Endothelial cell of umbilical vein (primary cell): ENCODE measurements at regions of chr7 and their contacts with region 1.

Region 1: GRCh38 chr7:18666107-18666728 is 170.7 kb downstream of the HDAC9 start:
- DNase-seq: peak; percentile 62
- H3K4me3 ChIP-seq: no peak overlapping the region
- H3K27ac ChIP-seq: no peak overlapping the region
- H3K4me1 ChIP-seq: peaks cover 28% of the 10 kb centered on the region
- H3K27me3 ChIP-seq: peaks cover 11 to 23% of the 10 kb centered on the region in 2 experiments
- CTCF ChIP-seq: peak; percentile 92 to 93
- POLR2A ChIP-seq: no peak

Region 2: GRCh38 chr7:18508443-18509427 is 157.5 kb before region 1 on chr7:
- CTCF ChIA-PET with region 1: no interaction called
- POLR2A ChIA-PET with region 1: no interaction called
- dilution Hi-C with region 1: no loop called
- intact Hi-C with region 1: loop called (anchors 5 kb)
- DNase-seq: peak; percentile 93
- H3K4me3 ChIP-seq: peak overlapping the region in 1 of 3 experiments; percentile 64
- H3K27ac ChIP-seq: peak overlapping the region; percentile 94
- H3K4me1 ChIP-seq: peaks cover 31% of the 10 kb centered on the region
- H3K27me3 ChIP-seq: no peaks in the 10 kb centered on the region
- CTCF ChIP-seq: no peak
- POLR2A ChIP-seq: no peak

Region 3: GRCh38 chr7:18590744-18591340 is 75.4 kb before region 1 on chr7:
- CTCF ChIA-PET with region 1: interaction called, 18 read pairs
- POLR2A ChIA-PET with region 1: no interaction called
- dilution Hi-C with region 1: no loop called
- intact Hi-C with region 1: loop called (anchors 1 kb)
- DNase-seq: peak; percentile 59
- H3K4me3 ChIP-seq: no peak overlapping the region
- H3K27ac ChIP-seq: no peak overlapping the region
- H3K4me1 ChIP-seq: no peaks in the 10 kb centered on the region
- H3K27me3 ChIP-seq: no peaks in the 10 kb centered on the region
- CTCF ChIP-seq: peak; percentile 30 to 38
- POLR2A ChIP-seq: no peak

Region 4: GRCh38 chr7:18655912-18656311 is 10.3 kb before region 1 on chr7:
- CTCF ChIA-PET with region 1: interaction called, 15 read pairs
- POLR2A ChIA-PET with region 1: no interaction called
- dilution Hi-C with region 1: no loop called
- intact Hi-C with region 1: no loop called
- DNase-seq: no peak
- H3K4me3 ChIP-seq: no peak overlapping the region
- H3K27ac ChIP-seq: no peak overlapping the region
- H3K4me1 ChIP-seq: no peaks in the 10 kb centered on the region
- H3K27me3 ChIP-seq: no peaks in the 10 kb centered on the region
- CTCF ChIP-seq: no peak
- POLR2A ChIP-seq: no peak

Region 5: DNA sequence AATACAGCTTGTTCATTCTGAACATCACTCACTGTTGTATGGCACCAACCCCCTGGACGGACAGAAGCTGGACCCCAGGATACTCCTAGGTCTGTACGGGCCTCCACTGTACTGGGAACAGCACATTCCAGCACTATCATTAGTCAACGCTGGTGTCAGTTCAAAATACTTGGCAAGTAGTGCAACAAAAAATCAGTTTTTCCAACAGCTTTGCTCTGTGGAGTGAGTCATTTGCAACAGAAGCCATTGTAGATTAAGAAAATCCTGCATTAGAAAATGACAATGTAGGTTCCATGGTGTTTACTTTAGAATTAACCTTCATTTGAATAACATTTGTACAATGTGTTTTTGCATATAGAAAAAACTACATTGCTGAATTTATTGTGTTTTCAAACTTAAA is 96.0 kb after region 1 on chr7:
- CTCF ChIA-PET with region 1: no interaction called
- POLR2A ChIA-PET with region 1: no interaction called
- dilution Hi-C with region 1: no loop called
- intact Hi-C with region 1: no loop called
- DNase-seq: peak; percentile 54
- H3K4me3 ChIP-seq: no peak overlapping the region
- H3K27ac ChIP-seq: no peak overlapping the region
- H3K4me1 ChIP-seq: no peaks in the 10 kb centered on the region
- H3K27me3 ChIP-seq: no peaks in the 10 kb centered on the region
- CTCF ChIP-seq: no peak
- POLR2A ChIP-seq: no peak

Region 6: DNA sequence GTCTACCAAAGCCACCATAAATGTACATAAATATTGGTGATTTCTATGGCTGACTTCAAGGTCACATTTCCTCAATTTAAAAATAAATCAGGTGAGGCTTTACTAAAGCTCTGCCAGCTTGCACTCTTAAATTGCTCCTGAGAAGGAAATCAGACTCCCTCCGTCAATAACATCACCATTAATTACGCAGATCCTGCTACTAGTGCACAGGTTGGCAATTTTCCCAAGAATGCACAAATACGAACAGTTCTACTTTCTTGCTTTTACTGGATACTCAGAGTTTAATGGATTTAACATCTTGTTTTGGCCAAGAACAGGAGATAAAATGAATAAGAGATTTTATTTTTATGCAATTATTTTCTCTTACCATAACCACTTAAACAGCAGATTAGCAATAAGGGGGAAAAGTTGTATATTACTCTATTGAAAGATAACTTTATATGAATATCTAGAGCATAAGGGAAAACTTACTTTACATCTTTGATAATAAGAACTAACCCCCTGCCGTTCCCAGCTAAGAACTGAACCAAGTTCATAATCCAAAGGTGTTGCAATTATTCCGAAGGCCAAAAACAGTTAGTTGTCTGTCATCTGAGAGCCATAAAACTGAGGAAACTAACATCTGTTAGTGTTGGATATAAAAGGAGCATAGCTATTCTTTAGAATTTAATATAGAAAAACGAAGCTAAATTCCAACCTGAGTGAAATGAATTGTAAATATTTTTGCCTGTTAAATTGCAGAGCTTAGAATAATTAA is 310.7 kb after region 1 on chr7:
- CTCF ChIA-PET with region 1: interaction called, 3 read pairs
- POLR2A ChIA-PET with region 1: no interaction called
- dilution Hi-C with region 1: no loop called
- intact Hi-C with region 1: loop called (anchors 2 kb)
- DNase-seq: peak; percentile 10
- H3K4me3 ChIP-seq: no peak overlapping the region
- H3K27ac ChIP-seq: no peak overlapping the region
- H3K4me1 ChIP-seq: peaks cover 17% of the 10 kb centered on the region
- H3K27me3 ChIP-seq: no peaks in the 10 kb centered on the region
- CTCF ChIP-seq: no peak
- POLR2A ChIP-seq: no peak

Region 7: DNA sequence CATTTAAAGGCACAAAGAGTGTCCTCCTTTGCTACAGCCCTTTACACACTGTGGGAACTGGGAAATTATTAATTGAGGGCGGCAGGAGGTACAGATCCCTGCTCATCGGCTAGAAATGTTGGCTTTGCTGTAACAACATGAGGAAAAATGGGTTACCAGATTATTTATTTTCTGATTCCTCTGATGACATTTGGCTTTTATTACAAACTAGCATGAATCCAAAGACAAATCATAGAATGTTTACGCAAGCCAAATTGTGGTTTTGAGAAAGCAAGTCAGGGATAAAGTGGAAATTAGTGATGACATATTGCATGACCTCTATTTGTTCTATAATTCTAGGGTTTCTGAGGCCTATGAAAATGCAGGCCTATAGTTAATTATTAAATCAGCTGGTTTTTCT is 1233.3 kb after region 1 on chr7:
- CTCF ChIA-PET with region 1: no interaction called
- POLR2A ChIA-PET with region 1: no interaction called
- dilution Hi-C with region 1: no loop called
- intact Hi-C with region 1: no loop called
- DNase-seq: no peak
- H3K4me3 ChIP-seq: no peak overlapping the region
- H3K27ac ChIP-seq: no peak overlapping the region
- H3K4me1 ChIP-seq: no peaks in the 10 kb centered on the region
- H3K27me3 ChIP-seq: no peaks in the 10 kb centered on the region
- CTCF ChIP-seq: no peak
- POLR2A ChIP-seq: no peak